ENCODE measurements at regions of chr14 and their contacts with region 1.

Region 1: GRCh38 chr14:31926123-31926522 is 151.0 kb upstream of the ARHGAP5 start:
- DNase-seq: no peak
- H3K4me3 Mint-ChIP-seq: no peak overlapping the region
- H3K27ac Mint-ChIP-seq: no peak overlapping the region
- H3K4me1 Mint-ChIP-seq: peaks cover 20% of the 10 kb centered on the region
- H3K27me3 Mint-ChIP-seq: peaks cover 1% of the 10 kb centered on the region

Region 2: DNA sequence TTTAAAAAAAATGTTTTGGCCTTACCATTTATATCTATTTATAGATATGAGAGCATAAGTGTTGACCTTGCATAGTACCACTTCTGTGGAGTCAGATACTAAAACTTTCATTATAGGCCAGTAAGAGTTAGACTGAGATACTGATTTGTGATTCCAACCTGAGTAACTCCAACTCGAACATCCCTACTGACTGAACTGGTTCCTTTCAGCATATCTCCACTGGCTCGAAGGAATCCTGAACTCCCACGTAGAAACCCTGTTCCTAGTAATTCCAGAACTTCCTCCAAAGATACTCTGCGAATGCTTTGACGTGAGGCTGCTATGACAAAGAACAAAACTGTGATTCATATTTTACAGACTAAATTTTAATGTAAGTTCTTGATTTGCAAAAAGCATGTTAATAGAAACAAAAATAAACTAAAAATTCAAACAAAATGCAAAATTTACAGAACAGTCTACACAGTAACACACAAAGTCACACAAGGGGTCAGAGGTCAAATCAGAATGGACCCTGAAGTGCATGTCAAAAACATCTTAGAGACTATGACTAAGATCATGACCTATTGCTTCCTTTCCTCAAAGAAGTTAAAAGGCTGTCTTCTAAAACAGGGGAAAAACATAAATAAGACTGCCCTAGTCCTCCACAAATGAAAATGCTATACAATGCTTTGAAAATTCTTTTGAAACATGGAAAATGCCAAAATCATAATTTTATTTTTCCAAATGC is 537.3 kb before region 1 on chr14:
- intact Hi-C with region 1: loop called (anchors 2 kb)
- DNase-seq: no peak
- H3K4me3 Mint-ChIP-seq: no peak overlapping the region
- H3K27ac Mint-ChIP-seq: peak overlapping the region; percentile 73
- H3K4me1 Mint-ChIP-seq: peaks cover 30% of the 10 kb centered on the region
- H3K27me3 Mint-ChIP-seq: no peaks in the 10 kb centered on the region

Region 3: GRCh38 chr14:31561155-31561846 is 364.8 kb before region 1 on chr14 and contains the start of gene NUBPL:
- intact Hi-C with region 1: loop called (anchors 2 kb)
- DNase-seq: peak; percentile 96
- H3K4me3 Mint-ChIP-seq: peak within 1 kb of the TSS; percentile 90
- H3K27ac Mint-ChIP-seq: peak within 1 kb of the TSS; percentile 95
- H3K4me1 Mint-ChIP-seq: peaks cover 21% of the 10 kb centered on the region
- H3K27me3 Mint-ChIP-seq: peaks cover 8% of the 10 kb centered on the region
- total RNA-seq, gene NUBPL: 8.7 and 9.5 TPM in 2 replicates

Region 4: DNA sequence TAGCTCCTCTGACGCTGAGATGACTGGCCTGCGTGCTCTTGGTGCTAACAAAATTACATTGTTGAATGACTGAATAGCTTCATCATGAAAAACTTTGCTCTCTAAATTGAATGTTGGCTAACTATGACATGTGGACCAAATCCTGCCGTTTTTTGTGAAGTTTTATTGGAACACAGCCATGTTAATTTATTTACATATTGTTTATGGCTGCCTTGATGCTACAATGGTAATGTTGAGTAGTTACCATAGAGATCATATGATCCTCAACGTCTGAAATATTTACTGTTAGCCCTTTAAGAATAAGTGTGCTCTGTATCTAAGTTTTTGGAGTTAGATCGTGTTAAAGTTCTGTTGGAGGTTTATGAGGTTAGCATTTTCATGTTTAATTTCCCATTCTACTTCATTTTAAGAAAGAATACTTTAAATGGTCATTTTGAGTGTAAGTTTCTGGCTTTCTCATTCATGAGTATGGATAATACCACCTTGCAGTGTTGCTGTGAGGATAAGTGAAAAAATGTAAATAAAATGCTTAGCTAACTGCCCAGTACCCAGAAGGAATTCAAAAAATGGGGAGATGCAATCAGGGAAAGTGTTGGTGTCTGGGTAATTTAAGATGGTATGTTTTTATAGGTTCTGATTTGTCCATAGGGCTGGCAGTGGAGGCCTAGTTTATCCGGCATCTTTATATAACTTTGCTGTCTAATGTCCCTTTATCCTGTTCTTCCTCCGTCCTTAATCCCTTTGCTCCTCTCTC is 329.6 kb before region 1 on chr14:
- intact Hi-C with region 1: no loop called
- DNase-seq: no peak
- H3K4me3 Mint-ChIP-seq: no peak overlapping the region
- H3K27ac Mint-ChIP-seq: no peak overlapping the region
- H3K4me1 Mint-ChIP-seq: no peaks in the 10 kb centered on the region
- H3K27me3 Mint-ChIP-seq: no peaks in the 10 kb centered on the region

Region 5: DNA sequence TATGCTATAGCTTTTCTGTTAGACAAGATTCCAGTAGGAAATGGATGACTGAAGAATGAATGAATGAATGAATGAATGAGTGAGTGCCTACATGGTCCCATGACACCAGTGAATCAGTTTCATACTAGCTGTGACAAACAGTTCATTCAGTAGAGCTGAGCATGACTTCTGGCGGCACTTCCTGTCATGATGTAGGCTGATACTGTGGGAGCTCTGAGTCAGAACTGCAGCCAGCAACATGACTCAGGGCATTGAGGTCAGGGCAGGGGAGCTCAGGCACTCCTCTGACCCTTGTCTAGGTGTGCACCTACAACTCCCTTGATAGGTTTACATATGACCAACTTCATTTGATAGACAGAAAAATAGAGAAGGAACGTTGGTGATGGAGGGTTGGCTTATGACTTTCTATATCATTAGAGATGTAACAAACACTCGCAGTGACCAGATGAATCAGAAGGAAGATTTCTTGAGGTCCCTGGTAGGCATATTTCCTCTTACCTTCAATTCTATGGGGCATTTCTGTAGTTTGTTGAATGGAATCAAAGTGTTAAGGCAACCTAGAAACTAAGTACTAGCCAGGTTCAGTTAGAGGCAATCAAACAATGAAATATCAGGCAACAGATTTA is 11.7 kb after region 1 on chr14:
- intact Hi-C with region 1: loop called (anchors 1 kb)
- DNase-seq: peak; percentile 65
- H3K4me3 Mint-ChIP-seq: no peak overlapping the region
- H3K27ac Mint-ChIP-seq: peak overlapping the region; percentile 62
- H3K4me1 Mint-ChIP-seq: peaks cover 28% of the 10 kb centered on the region
- H3K27me3 Mint-ChIP-seq: no peaks in the 10 kb centered on the region

Region 6: GRCh38 chr14:31947738-31948595 is 21.8 kb after region 1 on chr14:
- intact Hi-C with region 1: no loop called
- DNase-seq: no peak
- H3K4me3 Mint-ChIP-seq: no peak overlapping the region
- H3K27ac Mint-ChIP-seq: no peak overlapping the region
- H3K4me1 Mint-ChIP-seq: peaks cover 18% of the 10 kb centered on the region
- H3K27me3 Mint-ChIP-seq: peaks cover 14% of the 10 kb centered on the region

Region 7: GRCh38 chr14:32102152-32102787 is 176.1 kb after region 1 on chr14:
- intact Hi-C with region 1: loop called (anchors 1 kb)
- DNase-seq: peak; percentile 24
- H3K4me3 Mint-ChIP-seq: peak overlapping the region; percentile 22
- H3K27ac Mint-ChIP-seq: peak overlapping the region; percentile 18
- H3K4me1 Mint-ChIP-seq: peaks cover 37% of the 10 kb centered on the region
- H3K27me3 Mint-ChIP-seq: no peaks in the 10 kb centered on the region

Region 8: GRCh38 chr14:32252030-32252670 is 326.0 kb after region 1 on chr14:
- intact Hi-C with region 1: loop called (anchors 2 kb)
- DNase-seq: peak; percentile 28
- H3K4me3 Mint-ChIP-seq: no peak overlapping the region
- H3K27ac Mint-ChIP-seq: no peak overlapping the region
- H3K4me1 Mint-ChIP-seq: no peaks in the 10 kb centered on the region
- H3K27me3 Mint-ChIP-seq: no peaks in the 10 kb centered on the region

Measured in activated T-helper 2 cell treated with anti-CD3 and anti-CD28 coated beads, Interferon-gamma antibody, Interleukin-2, Interleukin-4, amounts not matched to agents 10 μg/mL and 5 μg/mL and 100 μg/mL, durations not matched to agents 14 hours and 24 hours and 36 hours (primary cell).